ENCODE measurements at regions of chr10 and their contacts with region 1.

Region 1: GRCh38 chr10:13787015-13787421 is 200.3 kb downstream of the PRPF18 start:
- DNase-seq: peak in 4 of 7 donors; percentile 22 to 60 (median 26)
- H3K4me3 ChIP-seq: no peak overlapping the region
- H3K27ac ChIP-seq: peak overlapping the region in 1 of 5 donors; percentile 11
- H3K4me1 ChIP-seq: peaks cover 0 to 18% of the 10 kb centered on the region in 2 donors
- H3K27me3 ChIP-seq: no peaks in the 10 kb centered on the region
- CTCF ChIP-seq: no peak
- POLR2A ChIP-seq: no peak

Region 2: DNA sequence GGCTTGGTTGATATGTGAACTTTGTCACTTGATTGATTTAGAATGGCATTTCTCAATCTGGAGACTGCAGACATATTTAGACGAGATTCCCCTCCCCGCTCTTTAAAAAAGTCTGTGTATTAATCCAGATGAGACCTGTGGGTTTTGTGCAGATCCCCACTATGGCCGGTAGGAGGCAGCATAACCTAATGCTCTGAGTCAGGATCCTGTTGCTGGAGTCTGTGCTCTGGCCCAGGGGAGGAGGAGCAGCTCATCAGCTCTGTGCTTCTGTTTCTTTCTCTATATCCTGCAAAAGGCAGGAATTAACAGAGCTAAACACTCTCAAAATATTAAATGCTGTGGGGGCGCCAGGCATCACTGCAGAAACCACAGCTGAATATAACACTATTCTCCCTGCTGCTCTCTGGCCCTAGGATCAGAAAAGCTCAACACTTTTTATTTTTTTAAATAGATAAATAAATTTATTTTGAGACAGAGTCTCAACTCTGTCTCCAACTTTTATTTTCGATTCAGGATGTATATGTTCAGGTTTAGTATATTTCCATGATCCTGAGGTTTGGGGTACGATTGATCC is 415.0 kb before region 1 on chr10:
- intact Hi-C with region 1: loop called in 1 of 2 experiments (anchors 5 kb)
- DNase-seq: peak; percentile 72 to 92 (median 78)
- H3K4me3 ChIP-seq: no peak overlapping the region
- H3K27ac ChIP-seq: no peak overlapping the region
- H3K4me1 ChIP-seq: no peaks in the 10 kb centered on the region
- H3K27me3 ChIP-seq: no peaks in the 10 kb centered on the region
- CTCF ChIP-seq: peak; percentile 82 to 96 (median 86)
- POLR2A ChIP-seq: no peak

Region 3: DNA sequence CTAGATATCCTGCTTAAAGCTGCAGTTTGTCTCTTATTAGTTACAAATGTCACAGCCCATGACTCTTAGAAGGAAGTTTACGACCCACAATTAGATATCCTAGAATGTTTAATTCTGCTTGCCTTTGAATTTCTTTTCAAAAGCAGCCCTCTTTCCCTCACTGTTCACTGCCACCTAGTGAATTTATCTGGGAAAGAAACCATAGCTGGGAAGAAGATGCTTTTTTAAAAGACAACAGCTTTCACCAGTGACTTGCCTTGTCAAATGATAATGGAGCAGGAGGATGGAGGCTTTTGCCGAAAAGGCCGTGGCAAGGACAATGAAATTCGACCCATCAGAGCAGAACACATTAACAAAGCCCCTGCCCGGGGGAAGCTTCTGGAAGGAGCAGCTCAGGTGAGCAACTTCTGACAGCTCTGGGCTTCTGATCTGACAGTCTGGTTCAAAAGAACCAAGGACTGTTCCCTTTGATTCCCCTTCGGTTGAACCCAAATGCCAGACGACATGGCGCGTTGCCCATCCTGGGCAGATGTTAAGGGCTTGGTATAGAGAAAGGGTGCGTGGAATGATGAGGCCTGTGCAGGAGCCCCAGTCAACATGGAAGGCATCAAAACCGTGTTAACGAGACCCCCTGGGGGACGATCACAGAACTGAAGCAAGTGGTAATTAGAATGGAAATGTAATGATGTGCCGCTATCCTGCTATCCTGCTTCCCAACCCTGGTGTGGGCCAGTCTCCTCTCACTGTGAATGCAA is 306.9 kb after region 1 on chr10:
- intact Hi-C with region 1: loop called in 1 of 2 experiments (anchors 10 kb)
- DNase-seq: no peak
- H3K4me3 ChIP-seq: no peak overlapping the region
- H3K27ac ChIP-seq: no peak overlapping the region
- H3K4me1 ChIP-seq: no peaks in the 10 kb centered on the region
- H3K27me3 ChIP-seq: no peaks in the 10 kb centered on the region
- CTCF ChIP-seq: peak in 4 of 6 experiments; percentile 39 to 49 (median 47)
- POLR2A ChIP-seq: no peak

Region 4: GRCh38 chr10:14146025-14146424 is 359.0 kb after region 1 on chr10:
- intact Hi-C with region 1: no loop called
- DNase-seq: no peak
- H3K4me3 ChIP-seq: no peak overlapping the region
- H3K27ac ChIP-seq: no peak overlapping the region
- H3K4me1 ChIP-seq: no peaks in the 10 kb centered on the region
- H3K27me3 ChIP-seq: no peaks in the 10 kb centered on the region
- CTCF ChIP-seq: no peak
- POLR2A ChIP-seq: no peak